CD8-positive, alpha-beta T cell (primary cell): ENCODE measurements at regions of chr6 and their contacts with region 1.

Region 1: GRCh38 chr6:159008656-159009288 is 8.8 kb upstream of the RSPH3 start:
- DNase-seq: peak in 3 of 9 experiments; percentile 58 to 78 (median 68)
- ATAC-seq: peak; percentile 78
- H3K4me3 ChIP-seq: peak overlapping the region in 1 of 2 experiments; percentile 32
- H3K4me3 Mint-ChIP-seq: peak overlapping the region; percentile 67
- H3K27ac ChIP-seq: peak overlapping the region in 1 of 2 experiments; percentile 24
- H3K27ac Mint-ChIP-seq: peak overlapping the region; percentile 12
- H3K4me1 ChIP-seq: peaks cover 6% of the 10 kb centered on the region
- H3K4me1 Mint-ChIP-seq: peaks cover 36% of the 10 kb centered on the region
- H3K27me3 ChIP-seq: no peaks in the 10 kb centered on the region
- H3K27me3 Mint-ChIP-seq: no peaks in the 10 kb centered on the region
- CTCF ChIP-seq: peak; percentile 73

Region 2: GRCh38 chr6:159149641-159150040 is 140.9 kb after region 1 on chr6:
- CTCF ChIA-PET with region 1: interaction called, 497 read pairs
- POLR2A ChIA-PET with region 1: interaction called, 3 read pairs
- intact Hi-C with region 1: no loop called
- DNase-seq: no peak
- ATAC-seq: no peak
- H3K4me3 ChIP-seq: no peak overlapping the region
- H3K4me3 Mint-ChIP-seq: no peak overlapping the region
- H3K27ac ChIP-seq: no peak overlapping the region
- H3K27ac Mint-ChIP-seq: no peak overlapping the region
- H3K4me1 ChIP-seq: peaks cover 5% of the 10 kb centered on the region
- H3K4me1 Mint-ChIP-seq: peaks cover 2% of the 10 kb centered on the region
- H3K27me3 ChIP-seq: no peaks in the 10 kb centered on the region
- H3K27me3 Mint-ChIP-seq: peaks cover 9% of the 10 kb centered on the region
- CTCF ChIP-seq: no peak